Tibial artery (tissue), 4 donors: ENCODE measurements at regions of chr3 and their contacts with region 1.

Region 1: DNA sequence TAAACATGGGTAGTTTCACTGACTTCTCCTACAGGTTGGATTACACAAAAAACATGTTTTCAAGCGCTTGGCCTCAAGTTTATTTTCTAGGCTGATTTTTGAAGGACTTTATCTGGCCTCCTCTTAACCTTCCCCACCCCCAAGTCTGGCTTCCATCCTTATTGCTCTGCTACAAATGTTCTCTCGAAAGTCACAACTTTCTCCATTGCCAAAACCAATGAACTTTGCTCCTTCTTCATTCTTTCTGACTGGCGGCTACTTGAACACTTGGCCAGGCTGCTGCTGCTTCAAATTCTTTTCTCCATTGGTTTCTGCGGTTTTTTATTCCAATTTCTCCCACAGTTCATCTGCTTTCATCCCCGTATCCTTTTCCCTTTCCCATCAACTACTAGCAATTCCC is 106.6 kb downstream of the TOP2B start:
- DNase-seq: peak in 1 of 2 donors; percentile 35
- H3K4me3 ChIP-seq: no peak overlapping the region
- H3K27ac ChIP-seq: peak overlapping the region; percentile 50 to 65
- H3K4me1 ChIP-seq: peaks cover 0 to 66% (median 38%) of the 10 kb centered on the region in 4 donors
- H3K27me3 ChIP-seq: no peaks in the 10 kb centered on the region
- CTCF ChIP-seq: no peak

Region 2: GRCh38 chr3:26590919-26591484 is 1032.9 kb after region 1 on chr3:
- intact Hi-C with region 1: loop called (anchors 5 kb)
- DNase-seq: no peak
- H3K4me3 ChIP-seq: no peak overlapping the region
- H3K27ac ChIP-seq: no peak overlapping the region
- H3K4me1 ChIP-seq: no peaks in the 10 kb centered on the region
- H3K27me3 ChIP-seq: no peaks in the 10 kb centered on the region
- CTCF ChIP-seq: no peak